ENCODE measurements at regions of chr1 and their contacts with region 1.

Region 1: GRCh38 chr1:86913896-86914634 is at the start of gene SELENOF:
- DNase-seq: peak; percentile 99 to 100
- H3K4me3 ChIP-seq: peak within 1 kb of the TSS; percentile 87 to 97
- H3K27ac ChIP-seq: peak within 1 kb of the TSS; percentile 84 to 92
- H3K4me1 ChIP-seq: peaks cover 0 to 5% of the 10 kb centered on the region in 2 donors
- H3K27me3 ChIP-seq: no peaks in the 10 kb centered on the region
- CTCF ChIP-seq: peak in 1 of 4 experiments; percentile 27
- POLR2A ChIP-seq: peak; percentile 11 to 88
- total RNA-seq, gene SELENOF: 155 to 232 (median 209) TPM

Region 2: DNA sequence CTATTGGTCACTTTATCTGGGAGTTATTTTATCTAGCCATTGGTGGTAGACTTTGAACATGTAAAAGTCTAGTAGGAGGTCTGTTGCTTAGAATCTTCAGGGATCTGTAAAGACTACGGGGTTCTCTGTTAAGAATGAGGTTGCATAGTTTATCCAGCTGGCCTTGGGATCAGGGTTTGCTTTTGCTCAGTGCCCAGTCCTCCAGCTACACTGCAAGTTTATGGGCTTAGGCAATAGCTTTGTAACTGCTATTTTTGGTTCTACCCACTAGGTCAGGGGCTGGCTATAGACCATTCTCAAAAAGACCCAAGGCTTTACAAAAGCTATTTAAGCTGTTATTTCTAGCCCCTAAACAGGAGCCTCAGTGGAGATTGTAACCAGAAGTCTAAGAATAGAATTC is 199.9 kb before region 1 on chr1:
- intact Hi-C with region 1: loop called (anchors 10 kb)
- DNase-seq: no peak
- H3K4me3 ChIP-seq: no peak overlapping the region
- H3K27ac ChIP-seq: no peak overlapping the region
- H3K4me1 ChIP-seq: peaks cover 0 to 5% of the 10 kb centered on the region in 2 donors
- H3K27me3 ChIP-seq: no peaks in the 10 kb centered on the region
- CTCF ChIP-seq: no peak
- POLR2A ChIP-seq: no peak

Region 3: DNA sequence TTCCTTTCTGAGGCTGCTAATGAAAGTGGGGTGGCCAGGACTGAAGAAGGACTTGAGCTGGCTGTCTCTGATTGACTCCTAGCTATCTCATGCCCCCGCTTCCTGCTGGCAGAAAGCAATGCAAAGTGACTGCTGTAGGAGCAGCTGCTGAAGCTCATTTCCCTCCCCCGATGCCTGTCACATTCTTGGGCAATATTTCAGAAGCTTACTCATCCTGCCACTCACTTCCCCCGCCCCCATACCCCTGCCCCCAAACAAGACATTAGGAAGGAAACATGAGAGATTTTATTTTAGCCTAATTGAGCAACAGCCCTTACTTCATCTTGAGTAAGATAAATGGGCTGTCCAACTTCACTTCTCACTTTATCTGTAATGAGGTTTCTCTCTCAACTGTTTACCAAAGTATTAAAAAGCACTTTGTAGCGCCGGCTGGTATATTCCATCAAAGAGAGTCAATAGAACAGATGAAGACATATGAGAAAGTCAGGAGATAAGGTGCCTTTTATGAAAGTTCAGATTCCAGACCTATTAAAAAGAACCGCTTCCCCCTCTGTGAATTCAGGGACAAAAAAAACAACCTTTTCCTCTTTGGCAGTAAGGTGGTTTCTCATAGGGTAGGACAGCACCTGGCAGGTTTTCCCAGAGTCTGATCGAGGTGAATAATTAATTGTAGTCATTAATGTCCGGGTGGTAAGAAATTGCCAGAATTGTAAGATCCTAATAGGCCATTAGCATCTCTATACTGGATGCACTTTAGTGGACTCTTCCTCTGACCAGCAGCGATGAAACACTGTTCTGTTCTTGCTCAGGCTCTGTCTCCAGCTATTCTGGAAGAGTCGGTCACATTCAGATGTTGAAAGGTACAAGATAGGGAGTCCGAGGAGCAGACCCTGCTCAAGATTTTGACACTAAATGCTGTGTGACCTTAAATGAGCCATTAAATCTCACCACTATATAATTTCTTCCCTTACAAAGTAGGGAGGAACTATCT is 139.5 kb before region 1 on chr1:
- intact Hi-C with region 1: no loop called
- DNase-seq: peak; percentile 73 to 86
- H3K4me3 ChIP-seq: peak overlapping the region in 1 of 2 donors; percentile 13
- H3K27ac ChIP-seq: peak overlapping the region; percentile 57 to 75
- H3K4me1 ChIP-seq: peaks cover 4 to 7% of the 10 kb centered on the region in 2 donors
- H3K27me3 ChIP-seq: no peaks in the 10 kb centered on the region
- CTCF ChIP-seq: no peak
- POLR2A ChIP-seq: no peak

Measured in uterus (tissue), 4 donors.